ENCODE measurements at regions of chr12 and their contacts with region 1.

Region 1: GRCh38 chr12:87667378-87667777 is 361.8 kb downstream of the C12orf50 start:
- DNase-seq: peak in 1 of 2 experiments; percentile 10
- H3K4me3 ChIP-seq: no peak overlapping the region
- H3K4me3 Mint-ChIP-seq: no peak overlapping the region
- H3K27ac Mint-ChIP-seq: no peak overlapping the region
- H3K4me1 ChIP-seq: no peaks in the 10 kb centered on the region
- H3K4me1 Mint-ChIP-seq: no peaks in the 10 kb centered on the region
- H3K27me3 ChIP-seq: no peaks in the 10 kb centered on the region
- H3K27me3 Mint-ChIP-seq: no peaks in the 10 kb centered on the region
- CTCF ChIP-seq: peak; percentile 26 to 33

Region 2: GRCh38 chr12:87266305-87266704 is 401.1 kb before region 1 on chr12:
- CTCF ChIA-PET with region 1: no interaction called
- POLR2A ChIA-PET with region 1: no interaction called
- intact Hi-C with region 1: loop called (anchors 2 kb)
- DNase-seq: peak in 1 of 2 experiments; percentile 21
- H3K4me3 ChIP-seq: no peak overlapping the region
- H3K4me3 Mint-ChIP-seq: no peak overlapping the region
- H3K27ac Mint-ChIP-seq: no peak overlapping the region
- H3K4me1 ChIP-seq: no peaks in the 10 kb centered on the region
- H3K4me1 Mint-ChIP-seq: no peaks in the 10 kb centered on the region
- H3K27me3 ChIP-seq: no peaks in the 10 kb centered on the region
- H3K27me3 Mint-ChIP-seq: no peaks in the 10 kb centered on the region
- CTCF ChIP-seq: peak; percentile 40 to 53

Region 3: GRCh38 chr12:87274594-87275245 is 392.7 kb before region 1 on chr12:
- CTCF ChIA-PET with region 1: no interaction called
- POLR2A ChIA-PET with region 1: no interaction called
- intact Hi-C with region 1: loop called (anchors 1 kb)
- DNase-seq: peak in 1 of 2 experiments; percentile 27
- H3K4me3 ChIP-seq: no peak overlapping the region
- H3K4me3 Mint-ChIP-seq: no peak overlapping the region
- H3K27ac Mint-ChIP-seq: no peak overlapping the region
- H3K4me1 ChIP-seq: no peaks in the 10 kb centered on the region
- H3K4me1 Mint-ChIP-seq: no peaks in the 10 kb centered on the region
- H3K27me3 ChIP-seq: no peaks in the 10 kb centered on the region
- H3K27me3 Mint-ChIP-seq: no peaks in the 10 kb centered on the region
- CTCF ChIP-seq: peak; percentile 60 to 70

Region 4: GRCh38 chr12:87344699-87345098 is 322.7 kb before region 1 on chr12:
- CTCF ChIA-PET with region 1: no interaction called
- POLR2A ChIA-PET with region 1: no interaction called
- intact Hi-C with region 1: loop called (anchors 2 kb)
- DNase-seq: no peak
- H3K4me3 ChIP-seq: no peak overlapping the region
- H3K4me3 Mint-ChIP-seq: no peak overlapping the region
- H3K27ac Mint-ChIP-seq: no peak overlapping the region
- H3K4me1 ChIP-seq: no peaks in the 10 kb centered on the region
- H3K4me1 Mint-ChIP-seq: no peaks in the 10 kb centered on the region
- H3K27me3 ChIP-seq: no peaks in the 10 kb centered on the region
- H3K27me3 Mint-ChIP-seq: peaks cover 5% of the 10 kb centered on the region
- CTCF ChIP-seq: no peak

Region 5: DNA sequence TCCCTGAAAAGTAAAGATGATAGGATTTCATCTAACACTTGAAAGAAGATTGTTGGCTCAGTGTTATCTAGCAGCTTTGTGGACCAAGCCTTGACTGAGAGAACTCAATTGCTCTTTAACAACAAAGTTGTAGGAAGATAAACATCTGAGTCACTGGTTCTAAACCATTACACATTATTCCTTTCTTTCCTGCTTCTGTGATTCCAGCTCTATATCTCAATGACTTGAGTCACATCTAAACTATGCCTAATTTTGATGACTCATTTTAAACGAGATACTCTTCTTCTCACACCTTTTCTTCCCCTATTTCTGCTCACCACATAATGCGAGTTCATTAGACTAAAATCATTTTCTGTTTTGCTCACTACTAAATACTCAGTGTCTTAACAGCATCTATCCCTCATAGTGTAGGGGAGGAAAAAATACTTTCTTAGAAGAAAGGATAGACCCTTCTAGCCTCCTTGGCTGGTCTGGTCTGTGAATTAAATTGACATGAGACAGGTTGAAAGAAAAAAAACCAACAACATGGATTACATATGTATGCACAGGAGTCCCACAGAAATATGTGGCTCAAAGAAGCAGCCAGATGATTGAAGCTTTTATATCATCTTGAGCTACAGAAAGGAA is 160.4 kb after region 1 on chr12:
- CTCF ChIA-PET with region 1: no interaction called
- POLR2A ChIA-PET with region 1: no interaction called
- intact Hi-C with region 1: no loop called
- DNase-seq: no peak
- H3K4me3 ChIP-seq: no peak overlapping the region
- H3K4me3 Mint-ChIP-seq: no peak overlapping the region
- H3K27ac Mint-ChIP-seq: no peak overlapping the region
- H3K4me1 ChIP-seq: no peaks in the 10 kb centered on the region
- H3K4me1 Mint-ChIP-seq: peaks cover 12% of the 10 kb centered on the region
- H3K27me3 ChIP-seq: no peaks in the 10 kb centered on the region
- H3K27me3 Mint-ChIP-seq: no peaks in the 10 kb centered on the region
- CTCF ChIP-seq: no peak

Measured in Caco-2 (cell line).